ENCODE measurements at regions of chr2 and their contacts with region 1.

Region 1: DNA sequence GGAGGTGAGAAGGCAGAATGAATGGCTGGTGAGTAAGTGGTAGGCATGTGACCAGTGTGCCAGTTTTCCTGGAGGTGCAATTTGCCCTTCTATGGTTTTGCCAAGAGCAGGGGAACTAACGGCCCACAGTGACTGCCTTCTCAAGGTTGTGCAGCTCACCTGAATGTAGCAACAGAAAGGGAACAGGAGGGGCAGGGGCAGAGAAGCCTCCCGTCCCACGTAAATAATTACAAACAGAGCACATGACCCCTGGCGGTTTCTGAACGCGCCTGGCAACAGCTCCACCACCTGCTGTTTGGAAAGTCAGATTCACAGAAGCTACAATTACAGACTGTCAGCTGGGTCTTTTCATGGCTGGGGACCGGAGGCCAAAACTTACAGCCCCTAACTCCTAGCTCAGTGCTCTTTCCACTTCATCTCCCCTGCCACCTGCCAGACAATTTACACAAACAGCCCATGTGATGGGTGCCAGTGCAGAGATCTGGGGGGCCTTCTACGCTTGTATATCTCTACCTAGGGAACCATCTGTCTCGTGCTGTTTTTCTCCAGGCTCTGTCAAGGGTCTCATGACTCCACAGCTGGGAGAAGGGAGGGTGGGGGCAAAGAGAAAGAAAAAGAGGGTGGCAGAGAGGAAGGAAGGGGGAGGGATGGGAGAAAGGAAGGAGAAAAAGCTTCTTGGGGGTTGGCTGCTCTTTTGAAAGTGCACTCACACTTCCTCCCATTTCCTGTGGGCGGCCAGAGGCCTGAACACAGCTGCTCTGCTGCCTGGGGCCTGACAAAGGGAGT is 69.6 kb downstream of the POLR1A start:
- DNase-seq: peak; percentile 81
- ATAC-seq: peak; percentile 48
- H3K4me3 Mint-ChIP-seq: peak overlapping the region; percentile 61
- H3K27ac Mint-ChIP-seq: peak overlapping the region; percentile 95
- H3K4me1 Mint-ChIP-seq: peaks cover 85% of the 10 kb centered on the region
- H3K27me3 Mint-ChIP-seq: no peaks in the 10 kb centered on the region

Region 2: DNA sequence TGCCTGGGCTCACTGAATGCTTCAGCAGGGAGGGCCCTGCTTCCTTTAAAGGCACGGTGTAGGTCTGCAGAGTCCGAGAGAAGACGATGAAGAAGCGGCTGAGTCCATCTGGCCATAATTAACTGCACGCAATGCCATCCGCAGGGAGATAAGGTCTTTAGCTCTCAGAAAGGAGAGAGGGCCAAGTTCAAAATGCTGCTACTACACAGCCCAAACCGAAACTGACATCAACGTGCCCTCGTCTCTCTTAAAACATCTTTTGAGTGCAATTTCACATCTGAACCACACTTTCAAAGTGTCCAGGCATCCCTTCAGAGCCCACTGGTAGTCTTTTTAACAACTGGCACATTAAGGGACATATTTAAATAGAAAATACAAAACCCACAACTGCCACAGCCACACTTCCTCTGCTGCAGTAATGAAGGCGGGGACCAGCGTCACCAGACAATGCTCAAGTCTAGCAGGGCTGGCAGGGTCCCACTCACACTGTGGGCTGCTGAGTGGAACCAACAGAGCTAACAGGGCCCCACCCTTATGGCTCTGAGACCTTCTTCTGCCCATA is 183.1 kb before region 1 on chr2:
- CTCF ChIA-PET with region 1: interaction called, 4 read pairs
- POLR2A ChIA-PET with region 1: interaction called, 13 read pairs
- DNase-seq: peak; percentile 85
- ATAC-seq: peak; percentile 91
- H3K4me3 Mint-ChIP-seq: peak overlapping the region; percentile 83
- H3K27ac Mint-ChIP-seq: peak overlapping the region; percentile 100
- H3K4me1 Mint-ChIP-seq: peaks cover 57% of the 10 kb centered on the region
- H3K27me3 Mint-ChIP-seq: no peaks in the 10 kb centered on the region

Region 3: DNA sequence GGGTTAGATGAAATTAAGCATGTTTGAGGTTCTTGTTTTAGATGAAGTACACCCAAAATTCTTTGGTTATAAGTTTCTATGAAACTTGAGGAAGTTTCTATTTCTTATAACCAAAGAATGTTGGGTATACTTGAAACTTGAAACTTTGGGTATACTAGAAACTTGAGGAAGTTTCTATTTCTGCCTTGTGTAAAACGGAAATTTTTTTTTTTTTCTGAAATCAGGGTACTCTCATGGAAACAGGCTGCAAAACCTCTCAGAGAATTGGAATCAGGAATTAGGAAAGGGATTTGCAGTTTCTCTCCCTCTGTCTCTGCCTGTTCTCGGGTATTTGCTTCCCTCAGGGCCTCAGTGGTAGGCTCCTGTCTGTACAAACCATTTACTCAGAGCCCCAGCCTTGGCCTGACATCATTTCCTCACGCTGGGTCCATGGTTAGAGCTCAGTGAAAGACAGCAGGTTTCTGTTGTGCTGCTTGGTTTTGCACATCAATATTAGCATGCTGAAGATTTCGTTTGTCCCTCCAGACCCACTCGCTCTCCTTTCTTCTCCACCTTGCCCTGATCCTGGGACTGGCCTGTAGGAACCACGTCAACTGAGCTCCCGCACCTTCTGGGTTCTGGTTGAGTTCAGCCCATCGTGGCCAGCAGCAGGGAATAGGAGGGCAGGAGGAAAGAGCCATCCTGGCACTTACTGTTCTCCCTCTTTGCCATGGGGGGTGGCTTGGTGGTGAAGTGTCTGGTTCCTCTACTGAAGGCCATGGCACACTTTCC is 36.8 kb before region 1 on chr2:
- CTCF ChIA-PET with region 1: interaction called, 21 read pairs
- POLR2A ChIA-PET with region 1: interaction called, 21 read pairs
- DNase-seq: peak; percentile 83
- ATAC-seq: peak; percentile 91
- H3K4me3 Mint-ChIP-seq: peak overlapping the region; percentile 55
- H3K27ac Mint-ChIP-seq: peak overlapping the region; percentile 96
- H3K4me1 Mint-ChIP-seq: peaks cover 78% of the 10 kb centered on the region
- H3K27me3 Mint-ChIP-seq: no peaks in the 10 kb centered on the region

Region 4: GRCh38 chr2:86025229-86025820 is 10.8 kb before region 1 on chr2:
- CTCF ChIA-PET with region 1: interaction called, 13 read pairs
- POLR2A ChIA-PET with region 1: no interaction called
- DNase-seq: no peak
- ATAC-seq: no peak
- H3K4me3 Mint-ChIP-seq: no peak overlapping the region
- H3K27ac Mint-ChIP-seq: peak overlapping the region; percentile 62
- H3K4me1 Mint-ChIP-seq: peaks cover 11% of the 10 kb centered on the region
- H3K27me3 Mint-ChIP-seq: no peaks in the 10 kb centered on the region

Region 5: GRCh38 chr2:86072271-86072858 is 36.3 kb after region 1 on chr2:
- CTCF ChIA-PET with region 1: interaction called, 88 read pairs
- POLR2A ChIA-PET with region 1: interaction called, 10 read pairs
- DNase-seq: no peak
- ATAC-seq: no peak
- H3K4me3 Mint-ChIP-seq: no peak overlapping the region
- H3K27ac Mint-ChIP-seq: peak overlapping the region; percentile 72
- H3K4me1 Mint-ChIP-seq: peaks cover 47% of the 10 kb centered on the region
- H3K27me3 Mint-ChIP-seq: no peaks in the 10 kb centered on the region

Region 6: GRCh38 chr2:86368161-86368824 is 332.2 kb after region 1 on chr2:
- CTCF ChIA-PET with region 1: no interaction called
- POLR2A ChIA-PET with region 1: no interaction called
- DNase-seq: peak; percentile 49
- ATAC-seq: peak; percentile 67
- H3K4me3 Mint-ChIP-seq: no peak overlapping the region
- H3K27ac Mint-ChIP-seq: no peak overlapping the region
- H3K4me1 Mint-ChIP-seq: peaks cover 32% of the 10 kb centered on the region
- H3K27me3 Mint-ChIP-seq: no peaks in the 10 kb centered on the region